ENCODE measurements at regions of chr11 and their contacts with region 1.

Region 1: DNA sequence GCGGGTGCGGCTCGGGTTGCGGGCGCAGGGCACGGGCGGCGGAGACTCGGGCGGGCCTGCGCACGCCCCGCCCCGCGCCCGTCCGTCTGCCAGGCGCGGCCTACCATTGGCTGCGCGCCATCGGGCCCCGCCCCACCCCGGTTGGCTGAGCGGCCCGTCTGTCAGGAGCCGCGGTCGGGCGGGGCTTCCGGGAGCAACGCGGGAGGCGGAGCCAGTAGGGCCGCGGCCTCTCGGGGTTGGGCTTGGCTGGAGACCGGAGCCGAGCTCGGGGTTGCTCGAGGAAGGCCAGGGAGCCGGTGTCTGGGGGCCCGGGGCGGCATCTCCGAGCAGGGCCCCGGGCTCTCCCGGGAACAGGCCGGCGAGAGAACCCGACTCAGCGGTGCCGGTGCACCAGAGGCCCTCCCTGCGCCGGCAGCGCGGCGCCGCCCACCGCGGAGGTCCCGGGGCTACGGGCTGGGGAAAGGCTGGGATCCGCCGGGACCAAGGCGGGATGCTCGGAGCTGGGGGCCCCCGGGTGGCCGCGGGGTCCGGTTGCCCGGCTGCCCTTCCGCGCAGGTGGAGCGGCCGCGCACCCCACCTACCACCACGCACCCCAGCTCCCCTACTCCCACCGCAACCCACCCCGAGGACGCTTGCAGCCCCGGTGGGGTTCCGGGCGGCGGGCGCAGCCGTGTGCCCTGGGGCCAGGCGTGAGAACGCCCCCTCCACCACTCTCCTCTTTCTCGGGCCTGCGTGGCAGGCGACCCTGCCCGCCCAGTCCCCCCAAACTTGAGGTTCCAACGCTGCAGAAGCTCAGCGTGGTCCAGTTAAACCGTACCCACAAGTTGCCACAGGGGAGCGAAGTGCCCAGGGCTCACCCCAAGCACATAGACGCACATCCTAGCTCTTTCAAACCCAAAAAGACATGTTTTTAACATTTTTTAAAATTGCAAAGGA is at the start of gene HRAS:
- DNase-seq: peak; percentile 96
- ATAC-seq: peak; percentile 76
- H3K4me3 ChIP-seq: peak within 1 kb of the TSS; percentile 68 to 80 (median 72)
- H3K4me3 Mint-ChIP-seq: peak within 1 kb of the TSS; percentile 97
- H3K27ac ChIP-seq: peak within 1 kb of the TSS; percentile 99
- H3K27ac Mint-ChIP-seq: peak within 1 kb of the TSS; percentile 99
- H3K4me1 ChIP-seq: peaks cover 17 to 35% of the 10 kb centered on the region in 2 donors
- H3K4me1 Mint-ChIP-seq: peaks cover 20% of the 10 kb centered on the region
- H3K27me3 ChIP-seq: no peaks in the 10 kb centered on the region
- H3K27me3 Mint-ChIP-seq: no peaks in the 10 kb centered on the region
- CTCF ChIP-seq: no peak
- total RNA-seq, gene HRAS: 63.5 and 66.2 TPM in 2 replicates

Region 2: GRCh38 chr11:207208-207862 is 328.5 kb before region 1 on chr11 and contains the starts of genes BET1L and RIC8A:
- CTCF ChIA-PET with region 1: no interaction called
- POLR2A ChIA-PET with region 1: interaction called, 6 read pairs
- intact Hi-C with region 1: loop called (anchors 5 kb)
- DNase-seq: peak; percentile 99
- ATAC-seq: peak; percentile 79
- H3K4me3 ChIP-seq: peak within 1 kb of the TSS; percentile 87 to 98 (median 91)
- H3K4me3 Mint-ChIP-seq: peak within 1 kb of the TSS; percentile 98
- H3K27ac ChIP-seq: peak within 1 kb of the TSS; percentile 96 to 98
- H3K27ac Mint-ChIP-seq: peak within 1 kb of the TSS; percentile 100
- H3K4me1 ChIP-seq: peaks cover 26 to 43% of the 10 kb centered on the region in 2 donors
- H3K4me1 Mint-ChIP-seq: peaks cover 53% of the 10 kb centered on the region
- H3K27me3 ChIP-seq: no peaks in the 10 kb centered on the region
- H3K27me3 Mint-ChIP-seq: no peaks in the 10 kb centered on the region
- CTCF ChIP-seq: no peak
- total RNA-seq, gene BET1L: 69.1 and 72.2 TPM in 2 replicates
- total RNA-seq, gene RIC8A: 102 and 110 TPM in 2 replicates

Region 3: DNA sequence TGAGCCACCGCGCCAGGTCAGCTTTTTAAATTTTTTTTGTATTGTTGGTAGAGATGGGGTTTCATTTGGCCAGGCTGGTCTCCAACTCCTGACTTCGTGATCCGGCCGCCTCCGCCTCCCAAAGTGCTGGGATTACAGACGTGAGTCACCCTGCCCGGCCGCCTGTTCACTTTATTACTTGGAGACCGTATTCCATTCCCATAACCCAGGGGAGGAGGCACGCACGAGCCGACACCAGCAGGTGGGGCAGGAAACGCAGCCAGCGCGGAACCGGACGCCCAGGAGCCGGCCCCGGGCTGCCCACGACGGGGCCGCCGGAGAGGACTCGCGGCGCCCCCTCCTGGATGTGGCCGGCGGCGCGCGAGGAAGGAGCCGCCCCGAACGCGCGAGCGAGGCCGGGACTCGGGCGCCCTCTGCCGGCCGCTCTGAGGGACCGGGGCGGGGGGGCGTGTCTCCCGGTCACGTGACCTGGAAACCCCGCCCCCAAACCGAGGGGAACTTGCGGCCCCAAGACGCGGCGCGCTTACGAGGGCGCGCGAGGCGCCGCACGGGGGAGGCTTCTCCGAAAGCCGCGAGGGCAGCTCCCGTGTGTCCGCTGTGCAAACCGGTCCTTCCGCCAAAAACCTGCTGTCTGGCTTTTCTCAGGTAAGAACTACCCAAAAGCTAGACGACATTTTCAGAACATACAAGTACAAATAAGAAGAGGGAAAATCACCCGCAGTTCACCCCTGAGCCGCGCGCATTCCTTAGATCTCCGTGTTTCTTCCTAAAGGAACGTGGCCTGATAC is 17.1 kb before region 1 on chr11:
- CTCF ChIA-PET with region 1: interaction called, 6 read pairs
- POLR2A ChIA-PET with region 1: interaction called, 6 read pairs
- intact Hi-C with region 1: loop called (anchors 1 kb)
- DNase-seq: peak; percentile 96
- ATAC-seq: peak; percentile 97
- H3K4me3 ChIP-seq: peak overlapping the region in 4 of 5 experiments; percentile 21 to 44 (median 40)
- H3K4me3 Mint-ChIP-seq: peak overlapping the region; percentile 86
- H3K27ac ChIP-seq: peak overlapping the region in 1 of 2 donors; percentile 36
- H3K27ac Mint-ChIP-seq: peak overlapping the region; percentile 83
- H3K4me1 ChIP-seq: peaks cover 3 to 4% of the 10 kb centered on the region in 2 donors
- H3K4me1 Mint-ChIP-seq: peaks cover 9% of the 10 kb centered on the region
- H3K27me3 ChIP-seq: no peaks in the 10 kb centered on the region
- H3K27me3 Mint-ChIP-seq: no peaks in the 10 kb centered on the region
- CTCF ChIP-seq: peak; percentile 100

Region 4: DNA sequence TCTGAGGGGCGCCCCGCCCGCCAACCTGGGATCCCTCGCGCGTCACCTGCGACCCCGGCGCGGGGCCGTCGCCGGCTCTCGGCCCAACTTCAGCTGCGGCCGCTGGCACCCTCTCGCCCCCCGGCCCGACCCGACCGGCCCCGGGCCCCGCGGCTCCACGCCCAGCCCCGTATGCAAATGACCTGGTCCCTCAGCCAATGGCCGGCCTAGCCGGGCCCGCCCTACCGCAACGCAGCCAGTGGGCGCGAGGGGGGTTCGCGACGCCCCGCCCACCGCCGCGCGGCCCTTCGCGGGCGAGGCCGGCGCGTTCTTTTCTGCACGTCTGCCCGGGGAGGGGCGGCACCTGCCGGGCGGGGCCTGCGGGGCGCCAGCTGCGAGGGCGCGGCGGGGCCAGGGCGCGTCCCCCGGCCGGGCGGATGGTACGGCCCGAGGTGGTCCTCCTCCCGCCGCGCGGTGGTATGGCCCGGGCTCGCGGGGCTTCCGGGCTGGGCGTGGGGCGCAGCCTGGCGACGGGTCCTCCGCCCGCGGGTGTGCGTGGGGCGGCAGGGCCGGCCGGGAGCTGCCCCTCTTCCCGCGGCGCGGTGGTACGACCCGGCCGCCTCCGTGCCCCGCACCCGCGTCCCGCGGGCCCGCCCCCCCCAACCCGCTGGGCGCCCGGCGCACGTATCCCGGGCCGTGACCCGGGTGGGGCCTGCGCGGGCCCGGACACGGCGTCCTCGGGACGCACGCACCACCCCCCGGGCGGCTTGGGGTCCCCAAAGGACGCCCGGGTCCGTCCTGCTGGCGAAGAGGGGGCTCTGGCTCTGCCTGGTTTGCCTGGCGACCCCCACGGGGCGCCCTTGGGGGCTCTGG is 32.7 kb after region 1 on chr11:
- CTCF ChIA-PET with region 1: no interaction called
- POLR2A ChIA-PET with region 1: interaction called, 10 read pairs
- intact Hi-C with region 1: loop called (anchors 2 kb)
- DNase-seq: peak; percentile 96
- ATAC-seq: peak; percentile 91
- H3K4me3 ChIP-seq: peak overlapping the region; percentile 30 to 85 (median 68)
- H3K4me3 Mint-ChIP-seq: peak overlapping the region; percentile 83
- H3K27ac ChIP-seq: peak overlapping the region; percentile 50 to 67
- H3K27ac Mint-ChIP-seq: peak overlapping the region; percentile 37
- H3K4me1 ChIP-seq: peaks cover 10 to 13% of the 10 kb centered on the region in 2 donors
- H3K4me1 Mint-ChIP-seq: peaks cover 9% of the 10 kb centered on the region
- H3K27me3 ChIP-seq: peaks cover 0 to 6% (median 2%) of the 10 kb centered on the region in 4 experiments
- H3K27me3 Mint-ChIP-seq: no peaks in the 10 kb centered on the region
- CTCF ChIP-seq: no peak

Region 5: GRCh38 chr11:695538-696248 is 159.9 kb after region 1 on chr11 and contains the start of gene TMEM80:
- CTCF ChIA-PET with region 1: no interaction called
- POLR2A ChIA-PET with region 1: interaction called, 18 read pairs
- intact Hi-C with region 1: loop called (anchors 1 kb)
- DNase-seq: peak; percentile 99
- ATAC-seq: peak; percentile 65
- H3K4me3 ChIP-seq: peak within 1 kb of the TSS; percentile 52 to 97 (median 84)
- H3K4me3 Mint-ChIP-seq: peak within 1 kb of the TSS; percentile 88
- H3K27ac ChIP-seq: peak within 1 kb of the TSS; percentile 100
- H3K27ac Mint-ChIP-seq: peak within 1 kb of the TSS; percentile 95
- H3K4me1 ChIP-seq: peaks cover 30 to 36% of the 10 kb centered on the region in 2 donors
- H3K4me1 Mint-ChIP-seq: peaks cover 48% of the 10 kb centered on the region
- H3K27me3 ChIP-seq: no peaks in the 10 kb centered on the region
- H3K27me3 Mint-ChIP-seq: no peaks in the 10 kb centered on the region
- CTCF ChIP-seq: no peak
- total RNA-seq, gene TMEM80: 77.8 and 84.1 TPM in 2 replicates

Region 6: GRCh38 chr11:798093-798713 is 262.4 kb after region 1 on chr11 and contains the start of gene SLC25A22:
- CTCF ChIA-PET with region 1: no interaction called
- POLR2A ChIA-PET with region 1: interaction called, 13 read pairs
- intact Hi-C with region 1: loop called (anchors 5 kb)
- DNase-seq: peak; percentile 94
- ATAC-seq: peak; percentile 78
- H3K4me3 ChIP-seq: peak within 1 kb of the TSS; percentile 19 to 95 (median 93)
- H3K4me3 Mint-ChIP-seq: peak within 1 kb of the TSS; percentile 95
- H3K27ac ChIP-seq: peak within 1 kb of the TSS; percentile 83 to 93
- H3K27ac Mint-ChIP-seq: peak within 1 kb of the TSS; percentile 92
- H3K4me1 ChIP-seq: peaks cover 17 to 35% of the 10 kb centered on the region in 2 donors
- H3K4me1 Mint-ChIP-seq: peaks cover 20% of the 10 kb centered on the region
- H3K27me3 ChIP-seq: no peaks in the 10 kb centered on the region
- H3K27me3 Mint-ChIP-seq: no peaks in the 10 kb centered on the region
- CTCF ChIP-seq: peak; percentile 85
- total RNA-seq, gene SLC25A22: 25.7 and 28.2 TPM in 2 replicates

Region 7: GRCh38 chr11:1309498-1310317 is 773.9 kb after region 1 on chr11 and contains the start of gene TOLLIP:
- CTCF ChIA-PET with region 1: no interaction called
- POLR2A ChIA-PET with region 1: no interaction called
- intact Hi-C with region 1: loop called (anchors 5 kb)
- DNase-seq: peak; percentile 98
- ATAC-seq: peak; percentile 71
- H3K4me3 ChIP-seq: peak within 1 kb of the TSS; percentile 28 to 71 (median 69)
- H3K4me3 Mint-ChIP-seq: peak within 1 kb of the TSS; percentile 83
- H3K27ac ChIP-seq: peak within 1 kb of the TSS; percentile 87
- H3K27ac Mint-ChIP-seq: peak within 1 kb of the TSS; percentile 94
- H3K4me1 ChIP-seq: peaks cover 48 to 53% of the 10 kb centered on the region in 2 donors
- H3K4me1 Mint-ChIP-seq: peaks cover 57% of the 10 kb centered on the region
- H3K27me3 ChIP-seq: no peaks in the 10 kb centered on the region
- H3K27me3 Mint-ChIP-seq: no peaks in the 10 kb centered on the region
- CTCF ChIP-seq: no peak
- total RNA-seq, gene TOLLIP: 52.5 and 59.7 TPM in 2 replicates

Measured in B cell (primary cell).